OCI-LY7 (cell line): ENCODE measurements at regions of chr12 and their contacts with region 1.

Region 1: GRCh38 chr12:65106948-65107347 is 14.2 kb downstream of the WIF1 start:
- DNase-seq: peak; percentile 6
- H3K4me3 ChIP-seq: no peak overlapping the region
- H3K27ac ChIP-seq: no peak overlapping the region
- H3K4me1 ChIP-seq: no peaks in the 10 kb centered on the region
- CTCF ChIP-seq: peak; percentile 67

Region 2: DNA sequence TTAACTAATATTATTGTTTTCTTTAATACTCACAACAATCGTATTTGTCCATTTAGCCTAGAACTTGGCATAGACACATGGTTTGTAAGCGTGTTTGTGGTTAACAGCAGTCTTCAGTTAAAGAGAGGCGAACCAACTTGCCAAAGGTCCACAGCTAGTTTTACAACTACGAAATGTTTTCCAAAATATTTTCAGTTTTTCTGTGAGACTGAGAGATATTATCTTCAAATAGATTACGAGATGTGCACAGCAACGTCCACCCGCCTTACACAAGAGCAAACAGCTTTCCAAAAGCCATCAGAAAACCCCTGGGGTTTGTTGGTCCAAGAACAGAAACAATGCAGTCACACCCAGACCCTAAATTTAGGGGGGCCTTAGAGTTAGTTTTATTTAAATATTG is 555.2 kb before region 1 on chr12:
- CTCF ChIA-PET with region 1: no interaction called
- POLR2A ChIA-PET with region 1: no interaction called
- intact Hi-C with region 1: no loop called
- DNase-seq: no peak
- H3K4me3 ChIP-seq: no peak overlapping the region
- H3K27ac ChIP-seq: no peak overlapping the region
- H3K4me1 ChIP-seq: no peaks in the 10 kb centered on the region
- CTCF ChIP-seq: no peak

Region 3: DNA sequence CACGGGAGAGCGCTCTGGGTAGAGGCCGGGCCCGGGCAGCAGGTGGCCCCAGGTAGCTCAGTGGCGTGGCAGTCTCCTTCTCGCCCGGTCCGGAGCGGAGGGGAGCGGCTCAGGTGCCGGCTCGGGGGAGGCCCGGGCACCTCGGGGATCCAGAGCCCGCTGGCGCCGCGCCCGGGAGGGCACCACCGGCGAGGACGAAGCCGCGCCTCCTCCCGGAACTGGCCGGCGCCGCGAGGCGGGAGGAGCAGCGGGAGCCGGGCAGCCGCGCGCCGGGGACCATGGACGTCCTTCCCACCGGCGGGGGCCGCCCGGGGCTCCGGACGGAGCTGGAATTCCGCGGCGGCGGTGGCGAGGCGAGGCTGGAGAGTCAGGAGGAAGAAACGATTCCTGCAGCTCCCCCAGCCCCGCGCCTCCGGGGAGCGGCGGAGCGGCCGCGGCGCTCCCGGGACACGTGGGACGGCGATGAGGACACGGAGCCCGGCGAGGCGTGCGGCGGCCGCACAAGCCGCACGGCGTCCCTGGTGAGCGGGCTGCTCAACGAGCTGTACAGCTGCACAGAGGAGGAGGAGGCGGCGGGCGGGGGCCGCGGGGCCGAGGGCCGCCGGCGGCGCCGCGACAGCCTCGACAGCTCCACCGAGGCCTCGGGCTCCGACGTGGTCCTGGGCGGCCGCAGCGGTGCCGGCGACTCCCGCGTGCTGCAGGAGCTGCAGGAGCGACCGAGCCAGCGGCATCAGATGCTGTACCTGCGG is 326.2 kb before region 1 on chr12:
- CTCF ChIA-PET with region 1: no interaction called
- POLR2A ChIA-PET with region 1: no interaction called
- intact Hi-C with region 1: no loop called
- DNase-seq: no peak
- H3K4me3 ChIP-seq: no peak overlapping the region
- H3K27ac ChIP-seq: no peak overlapping the region
- H3K4me1 ChIP-seq: peaks cover 7% of the 10 kb centered on the region
- CTCF ChIP-seq: no peak

Region 4: GRCh38 chr12:64801381-64801780 is 305.6 kb before region 1 on chr12:
- CTCF ChIA-PET with region 1: no interaction called
- POLR2A ChIA-PET with region 1: no interaction called
- intact Hi-C with region 1: loop called (anchors 10 kb)
- DNase-seq: no peak
- H3K4me3 ChIP-seq: no peak overlapping the region
- H3K27ac ChIP-seq: no peak overlapping the region
- H3K4me1 ChIP-seq: no peaks in the 10 kb centered on the region
- CTCF ChIP-seq: peak; percentile 39; the same call in 1 of the 2 replicates

Region 5: DNA sequence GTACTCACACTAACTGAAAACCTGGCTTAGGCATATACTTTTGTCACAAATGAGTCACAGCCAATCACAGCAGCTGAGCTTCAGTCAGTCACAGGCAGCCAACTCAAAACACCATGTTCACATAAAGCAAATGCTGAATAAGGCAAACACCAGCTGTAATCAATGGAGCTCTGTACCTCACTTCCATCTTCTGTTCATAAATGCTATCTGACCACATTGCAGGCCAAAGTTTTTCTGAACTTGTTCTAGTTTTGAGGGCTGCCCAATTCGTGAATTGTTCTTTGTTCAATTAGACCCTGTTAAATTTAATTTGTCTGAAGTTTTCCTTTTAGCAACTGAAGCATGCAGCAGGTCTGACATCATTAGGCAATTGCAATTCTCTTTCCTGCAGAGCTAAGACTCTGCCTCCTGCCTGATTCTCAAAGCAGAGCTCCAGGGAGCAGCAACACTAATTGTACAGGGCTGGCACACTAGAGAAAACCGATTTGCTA is 115.8 kb before region 1 on chr12:
- CTCF ChIA-PET with region 1: no interaction called
- POLR2A ChIA-PET with region 1: no interaction called
- intact Hi-C with region 1: no loop called
- DNase-seq: no peak
- H3K4me3 ChIP-seq: no peak overlapping the region
- H3K27ac ChIP-seq: no peak overlapping the region
- H3K4me1 ChIP-seq: no peaks in the 10 kb centered on the region
- CTCF ChIP-seq: no peak